T-cell (primary cell): ENCODE measurements at regions of chr15 and their contacts with region 1.

Region 1: DNA sequence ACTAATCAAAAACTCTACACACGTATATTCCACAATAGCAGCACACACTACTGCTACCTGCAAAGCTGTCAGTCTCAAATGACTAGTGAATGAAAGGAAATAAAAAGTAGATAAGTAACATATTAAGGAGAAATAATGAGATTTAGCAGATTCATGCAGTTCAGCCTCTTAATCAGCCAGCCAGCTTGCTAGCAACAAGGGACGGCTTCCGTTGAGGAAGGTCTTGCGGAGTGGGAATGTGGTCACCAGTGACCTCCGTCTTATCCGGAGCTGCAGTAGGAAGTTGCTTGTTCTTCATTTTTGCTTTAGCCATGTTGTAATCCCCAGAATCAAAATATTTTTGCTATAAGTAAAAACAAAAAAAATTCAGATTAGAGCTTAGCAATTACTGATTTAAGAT is 17.1 kb downstream of the ARPP19 start:
- DNase-seq: peak in 1 of 35 experiments; percentile 29
- ATAC-seq: no peak
- H3K4me3 ChIP-seq: no peak overlapping the region
- H3K4me3 Mint-ChIP-seq: no peak overlapping the region
- H3K27ac ChIP-seq: no peak overlapping the region
- H3K27ac Mint-ChIP-seq: no peak overlapping the region
- H3K4me1 ChIP-seq: no peaks in the 10 kb centered on the region
- H3K4me1 Mint-ChIP-seq: peaks cover 6 to 12% (median 8%) of the 10 kb centered on the region in 3 donors
- H3K27me3 ChIP-seq: no peaks in the 10 kb centered on the region
- H3K27me3 Mint-ChIP-seq: no peaks in the 10 kb centered on the region

Region 2: GRCh38 chr15:52392008-52392687 is 159.6 kb before region 1 on chr15:
- CTCF ChIA-PET with region 1: no interaction called
- POLR2A ChIA-PET with region 1: interaction called in 1 of 2 experiments, 11 read pairs
- DNase-seq: no peak
- ATAC-seq: no peak
- H3K4me3 ChIP-seq: no peak overlapping the region
- H3K4me3 Mint-ChIP-seq: no peak overlapping the region
- H3K27ac ChIP-seq: no peak overlapping the region
- H3K27ac Mint-ChIP-seq: no peak overlapping the region
- H3K4me1 ChIP-seq: no peaks in the 10 kb centered on the region
- H3K4me1 Mint-ChIP-seq: no peaks in the 10 kb centered on the region
- H3K27me3 ChIP-seq: no peaks in the 10 kb centered on the region
- H3K27me3 Mint-ChIP-seq: no peaks in the 10 kb centered on the region

Region 3: DNA sequence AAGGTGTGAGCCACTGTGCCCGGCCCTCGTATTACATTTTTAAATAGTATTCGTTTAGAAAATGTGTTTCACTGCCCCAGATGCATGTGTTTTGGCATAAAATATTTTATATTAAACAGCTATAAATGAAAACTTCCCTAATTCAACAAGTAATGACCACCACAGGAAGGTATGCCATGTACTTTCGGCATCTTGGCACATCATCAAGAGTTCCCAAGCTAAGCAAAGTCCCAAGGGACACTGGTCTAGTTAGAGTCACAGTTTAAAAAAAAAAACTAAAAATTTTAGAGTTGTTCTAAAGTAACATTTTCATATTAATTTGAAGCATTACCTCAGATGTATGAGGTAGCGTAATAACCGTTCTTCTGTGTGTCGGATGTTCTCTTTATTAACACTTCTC is 32.7 kb after region 1 on chr15:
- CTCF ChIA-PET with region 1: no interaction called
- POLR2A ChIA-PET with region 1: interaction called in 1 of 2 experiments, 22 read pairs
- DNase-seq: no peak
- ATAC-seq: no peak
- H3K4me3 ChIP-seq: no peak overlapping the region
- H3K4me3 Mint-ChIP-seq: no peak overlapping the region
- H3K27ac ChIP-seq: no peak overlapping the region
- H3K27ac Mint-ChIP-seq: no peak overlapping the region
- H3K4me1 ChIP-seq: no peaks in the 10 kb centered on the region
- H3K4me1 Mint-ChIP-seq: no peaks in the 10 kb centered on the region
- H3K27me3 ChIP-seq: no peaks in the 10 kb centered on the region
- H3K27me3 Mint-ChIP-seq: no peaks in the 10 kb centered on the region

Region 4: GRCh38 chr15:52615284-52615683 is 63.5 kb after region 1 on chr15:
- CTCF ChIA-PET with region 1: no interaction called
- POLR2A ChIA-PET with region 1: no interaction called
- DNase-seq: no peak
- ATAC-seq: no peak
- H3K4me3 ChIP-seq: no peak overlapping the region
- H3K4me3 Mint-ChIP-seq: no peak overlapping the region
- H3K27ac ChIP-seq: no peak overlapping the region
- H3K27ac Mint-ChIP-seq: no peak overlapping the region
- H3K4me1 ChIP-seq: no peaks in the 10 kb centered on the region
- H3K4me1 Mint-ChIP-seq: peaks cover 4 to 14% (median 4%) of the 10 kb centered on the region in 3 donors
- H3K27me3 ChIP-seq: no peaks in the 10 kb centered on the region
- H3K27me3 Mint-ChIP-seq: no peaks in the 10 kb centered on the region